Left lung (tissue), 14 donors: ENCODE measurements at regions of chr20 and their contacts with region 1.

Region 1: GRCh38 chr20:23441850-23442313 is 2.4 kb downstream of the CSTL1 start:
- DNase-seq: peak in 3 of 4 donors; percentile 46 to 67 (median 64)
- ATAC-seq: peak; percentile 90
- H3K4me3 ChIP-seq: no peak overlapping the region
- H3K27ac ChIP-seq: no peak overlapping the region
- H3K4me1 ChIP-seq: no peaks in the 10 kb centered on the region
- H3K27me3 ChIP-seq: no peaks in the 10 kb centered on the region
- CTCF ChIP-seq: peak; percentile 70 to 91

Region 2: GRCh38 chr20:23606652-23607049 is 164.8 kb after region 1 on chr20:
- intact Hi-C with region 1: loop called in 1 of 2 experiments (anchors 10 kb)
- DNase-seq: peak; percentile 43 to 88 (median 75)
- ATAC-seq: peak; percentile 99
- H3K4me3 ChIP-seq: no peak overlapping the region
- H3K27ac ChIP-seq: no peak overlapping the region
- H3K4me1 ChIP-seq: peaks cover 0 to 4% of the 10 kb centered on the region in 2 donors
- H3K27me3 ChIP-seq: no peaks in the 10 kb centered on the region
- CTCF ChIP-seq: peak; percentile 77 to 90